ENCODE measurements at regions of chr20 and their contacts with region 1.

Region 1: GRCh38 chr20:45771182-45771759 is 20.4 kb downstream of the WFDC3 start:
- DNase-seq: peak; percentile 80 to 87
- H3K4me3 ChIP-seq: no peak overlapping the region
- H3K4me1 ChIP-seq: no peaks in the 10 kb centered on the region
- H3K27me3 ChIP-seq: peaks cover 21% of the 10 kb centered on the region

Region 2: DNA sequence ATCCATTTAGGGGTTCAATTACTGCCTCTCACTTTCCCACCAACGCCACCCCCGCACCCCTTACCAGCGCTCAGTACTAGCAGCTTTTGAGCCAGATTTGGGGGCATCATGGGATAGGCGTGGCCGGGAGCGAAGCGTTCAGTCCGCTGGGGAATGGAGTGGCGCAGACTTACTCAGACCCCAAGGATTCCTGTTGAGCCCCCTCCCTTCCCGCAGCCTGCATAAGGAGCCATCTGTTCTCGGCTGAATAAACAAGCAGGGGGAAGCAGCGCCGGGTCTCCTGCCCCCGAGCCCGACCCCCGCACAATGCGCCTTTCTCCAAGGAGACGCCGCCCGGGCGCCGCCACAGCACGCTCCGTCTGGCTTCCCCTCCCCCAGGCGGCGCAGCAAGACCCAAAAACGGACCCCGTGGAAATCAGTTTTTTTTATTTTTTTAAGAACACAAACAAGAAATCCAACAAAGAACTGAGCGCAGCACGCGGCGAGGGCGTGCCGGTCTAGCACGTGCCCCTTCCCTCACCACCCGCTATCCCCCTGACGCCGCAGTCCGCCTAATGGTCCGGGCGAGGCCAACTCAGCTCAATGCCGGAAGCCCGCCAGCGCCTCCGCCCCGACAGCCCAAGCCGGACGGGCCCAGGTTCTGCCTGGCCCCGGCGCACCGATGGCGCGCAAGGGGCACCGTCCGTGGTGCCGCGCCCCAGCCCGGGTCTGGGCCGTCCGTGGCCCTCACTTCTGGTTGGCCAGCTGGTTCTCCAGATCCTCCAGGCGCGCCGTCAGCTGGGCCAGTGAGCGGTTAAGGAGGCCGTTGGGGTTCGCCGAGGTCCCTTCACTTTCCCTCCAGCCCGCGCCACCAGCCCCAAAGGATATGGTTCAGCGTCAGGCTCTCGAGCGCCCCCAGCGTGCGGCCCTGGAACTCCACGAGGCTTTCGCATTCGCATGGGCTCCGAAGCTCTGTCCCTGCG is 477.9 kb before region 1 on chr20:
- in situ Hi-C with region 1: no loop called
- DNase-seq: peak; percentile 51 to 91
- H3K4me3 ChIP-seq: peak overlapping the region; percentile 30
- H3K4me1 ChIP-seq: no peaks in the 10 kb centered on the region
- H3K27me3 ChIP-seq: no peaks in the 10 kb centered on the region; the same call in 1 of the 2 replicates

Region 3: GRCh38 chr20:45311589-45312211 is 459.6 kb before region 1 on chr20:
- in situ Hi-C with region 1: loop called (anchors 10 kb)
- DNase-seq: peak; percentile 64 to 85
- H3K4me3 ChIP-seq: no peak overlapping the region
- H3K4me1 ChIP-seq: no peaks in the 10 kb centered on the region
- H3K27me3 ChIP-seq: no peaks in the 10 kb centered on the region

Region 4: GRCh38 chr20:45450097-45450818 is 321.0 kb before region 1 on chr20:
- in situ Hi-C with region 1: loop called (anchors 10 kb)
- DNase-seq: peak; percentile 16 to 33
- H3K4me3 ChIP-seq: no peak overlapping the region
- H3K4me1 ChIP-seq: no peaks in the 10 kb centered on the region
- H3K27me3 ChIP-seq: no peaks in the 10 kb centered on the region

Region 5: DNA sequence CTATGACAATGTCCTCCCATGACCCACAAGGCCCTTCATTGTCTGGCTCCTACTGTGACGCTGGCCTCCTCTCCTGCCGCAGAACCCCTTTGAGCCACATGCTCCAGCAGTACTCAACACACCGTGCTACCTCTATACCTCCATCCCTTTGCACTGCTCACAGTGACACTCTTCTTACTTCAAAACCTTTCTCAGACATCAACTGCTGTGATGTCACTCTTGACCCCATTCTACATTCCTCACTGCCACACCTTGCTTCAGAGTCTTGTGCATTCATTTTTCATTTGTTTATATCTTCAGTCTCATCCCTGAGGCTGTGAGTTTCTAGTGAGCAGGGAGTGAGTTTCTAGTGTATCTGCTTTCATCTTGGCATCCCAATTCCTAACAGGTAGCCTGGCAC is 227.5 kb before region 1 on chr20:
- in situ Hi-C with region 1: loop called (anchors 5 kb)
- DNase-seq: no peak
- H3K4me3 ChIP-seq: no peak overlapping the region
- H3K4me1 ChIP-seq: peaks cover 2% of the 10 kb centered on the region
- H3K27me3 ChIP-seq: peaks cover 57% of the 10 kb centered on the region

Region 6: DNA sequence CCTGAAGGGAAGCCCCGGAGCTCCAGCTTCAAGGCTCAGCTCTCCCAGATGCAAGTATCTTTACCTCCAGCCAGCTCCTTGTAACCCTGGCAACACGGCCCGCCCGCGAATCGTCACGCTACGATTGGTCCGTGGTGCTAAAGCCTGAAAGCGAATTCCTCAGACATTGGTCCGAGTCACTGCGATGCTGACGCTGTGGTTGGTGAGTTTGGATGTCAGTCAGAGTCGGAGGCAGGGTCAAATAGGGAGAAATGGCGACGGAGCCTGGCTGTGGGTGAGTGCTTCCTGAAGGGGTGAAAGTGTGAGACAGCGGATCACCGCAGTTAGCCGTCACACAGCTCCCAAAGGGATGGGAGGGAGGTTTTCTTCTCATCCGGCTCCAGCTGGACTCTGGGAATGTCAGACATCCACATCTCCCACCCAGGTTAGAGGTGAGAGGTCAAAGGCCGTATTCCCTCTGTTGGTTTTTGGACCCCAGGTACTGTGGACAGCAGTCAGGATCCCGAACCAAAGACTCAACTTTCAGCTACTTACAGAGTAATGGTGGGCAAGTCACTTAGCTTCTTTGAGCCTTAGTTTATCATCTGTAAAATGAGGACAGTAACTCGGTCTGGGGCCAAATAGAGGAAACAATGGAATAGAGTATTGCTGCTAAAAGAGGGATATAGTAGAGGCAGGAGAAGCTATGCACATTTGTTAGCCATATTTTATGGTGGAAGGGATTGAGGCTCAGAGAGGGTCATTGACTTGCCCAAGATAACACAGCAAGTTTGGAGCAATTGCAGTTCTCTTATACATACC is 109.9 kb after region 1 on chr20 and contains the start of gene ZSWIM1:
- in situ Hi-C with region 1: no loop called
- DNase-seq: peak; percentile 96 to 99
- H3K4me3 ChIP-seq: peak within 1 kb of the TSS; percentile 51
- H3K4me1 ChIP-seq: no peaks in the 10 kb centered on the region
- H3K27me3 ChIP-seq: no peaks in the 10 kb centered on the region

Region 7: DNA sequence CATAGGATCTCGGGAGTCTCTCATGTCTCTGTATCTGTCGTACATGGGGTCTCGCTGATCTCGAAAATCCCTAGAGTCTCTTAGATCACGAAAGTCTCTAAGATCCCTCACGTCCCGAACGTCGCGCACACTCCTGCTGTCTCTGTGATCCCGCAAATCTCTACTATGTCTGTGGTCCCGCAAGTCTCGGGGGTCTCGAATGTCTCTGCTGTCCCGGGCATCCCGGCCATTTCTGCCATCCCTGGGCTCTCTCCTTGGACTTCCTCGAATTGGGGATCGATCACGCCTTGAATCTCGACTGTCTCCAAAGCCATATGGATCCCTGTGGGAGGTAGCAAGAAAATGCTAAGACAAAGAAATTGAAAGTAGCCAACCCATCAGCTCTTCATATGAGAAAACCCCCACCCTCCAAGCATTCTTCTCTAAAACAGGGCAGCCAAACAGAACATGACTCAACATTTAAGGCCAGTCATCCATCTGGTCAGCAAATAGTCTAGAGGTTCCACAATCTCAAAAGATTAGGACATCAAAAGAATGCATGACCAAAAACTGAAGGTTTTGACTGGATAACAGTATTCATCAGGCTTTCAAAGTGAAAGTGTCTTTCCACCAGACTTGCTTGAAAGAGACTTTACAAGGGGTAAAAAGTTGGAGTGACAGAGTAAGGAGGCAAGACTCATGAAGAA is 299.1 kb after region 1 on chr20:
- in situ Hi-C with region 1: no loop called
- DNase-seq: no peak
- H3K4me3 ChIP-seq: no peak overlapping the region
- H3K4me1 ChIP-seq: peaks cover 14% of the 10 kb centered on the region
- H3K27me3 ChIP-seq: no peaks in the 10 kb centered on the region

Measured in HAP-1 (cell line).